ENCODE measurements at regions of chr5 and their contacts with region 1.

Region 1: GRCh38 chr5:472656-473553 is 29.9 kb downstream of the EXOC3 start:
- DNase-seq: peak; percentile 86
- H3K4me3 Mint-ChIP-seq: peak overlapping the region; percentile 78
- H3K27ac Mint-ChIP-seq: peak overlapping the region; percentile 81
- H3K4me1 Mint-ChIP-seq: peaks cover 28% of the 10 kb centered on the region
- H3K27me3 Mint-ChIP-seq: peaks cover 2% of the 10 kb centered on the region

Region 2: DNA sequence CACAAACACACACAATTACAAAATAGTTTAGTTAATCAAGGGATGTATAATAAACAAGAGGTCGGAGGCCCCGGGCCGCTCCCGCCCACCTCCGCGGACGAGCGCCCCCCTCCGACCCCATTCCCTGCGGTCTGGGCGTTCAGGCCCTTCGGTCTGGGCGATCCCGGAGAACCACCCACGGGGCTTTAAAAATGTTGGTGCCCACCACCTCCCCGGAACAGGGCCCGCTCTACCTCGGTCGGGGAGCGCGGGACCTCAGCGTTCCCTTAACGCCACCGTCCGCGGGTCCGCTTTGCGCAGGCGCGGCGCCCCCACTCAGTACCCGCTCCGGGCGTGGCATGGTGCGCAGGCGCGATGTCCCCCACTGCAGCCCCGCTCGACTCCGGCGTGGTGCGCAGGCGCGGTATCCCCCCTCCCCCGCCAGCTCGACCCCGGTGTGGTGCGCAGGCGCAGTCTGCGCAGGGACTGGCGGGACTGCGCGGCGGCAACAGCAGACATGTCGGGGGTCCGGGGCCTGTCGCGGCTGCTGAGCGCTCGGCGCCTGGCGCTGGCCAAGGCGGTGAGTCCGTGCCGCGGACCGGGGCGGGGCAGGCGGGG is 254.9 kb before region 1 on chr5 and contains the starts of genes CCDC127 and SDHA:
- CTCF ChIA-PET with region 1: no interaction called
- intact Hi-C with region 1: loop called (anchors 5 kb)
- DNase-seq: peak; percentile 94
- H3K4me3 Mint-ChIP-seq: peak within 1 kb of the TSS; percentile 92
- H3K27ac Mint-ChIP-seq: peak within 1 kb of the TSS; percentile 86
- H3K4me1 Mint-ChIP-seq: peaks cover 60% of the 10 kb centered on the region
- H3K27me3 Mint-ChIP-seq: no peaks in the 10 kb centered on the region
- total RNA-seq, gene CCDC127: 3.6 to 4.0 TPM
- total RNA-seq, gene SDHA: 133 to 136 TPM

Region 3: DNA sequence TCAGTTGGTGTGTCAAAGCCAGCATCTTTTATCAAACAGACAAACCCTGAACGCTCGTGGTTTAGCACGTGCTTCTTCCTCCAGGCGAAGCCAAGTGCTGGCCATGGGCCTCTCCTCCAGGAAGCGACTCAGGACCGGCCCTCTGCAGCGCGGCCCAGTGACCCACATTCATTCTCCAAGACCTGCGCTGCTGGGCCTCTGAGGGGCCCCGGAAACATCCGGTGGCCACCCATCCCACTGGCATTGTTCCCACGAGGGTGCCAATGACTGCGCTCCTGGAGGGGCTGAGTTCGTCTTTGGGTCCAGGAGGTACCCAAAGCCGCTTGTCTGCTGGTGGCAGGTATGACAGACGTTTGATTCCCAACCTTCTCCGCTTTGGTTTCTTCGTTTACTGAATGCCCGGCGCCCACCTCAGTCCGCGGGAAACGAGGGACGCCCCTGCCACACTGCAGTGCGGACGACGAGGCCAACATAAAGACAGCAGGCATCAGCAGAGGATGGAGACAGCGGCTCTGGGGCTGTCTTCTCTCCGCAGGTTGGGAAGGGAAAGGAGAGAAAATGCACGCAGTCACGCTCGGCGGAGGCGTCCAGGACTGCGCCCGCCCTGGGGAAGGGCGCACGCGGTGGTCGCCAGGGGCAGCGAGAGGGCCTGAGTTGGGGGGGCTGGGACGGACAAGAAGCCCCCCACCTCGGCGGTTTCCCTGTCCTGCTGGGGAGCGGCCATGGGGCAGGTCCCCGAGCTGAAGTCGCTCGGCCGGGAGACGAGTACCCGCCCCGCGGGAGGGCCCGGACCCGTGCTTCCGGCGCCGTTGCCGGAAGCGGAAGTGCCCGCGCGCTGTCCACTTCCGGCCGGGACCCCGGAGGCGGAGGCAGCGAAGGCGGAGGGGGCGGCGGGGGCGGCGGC is 30.3 kb before region 1 on chr5 and contains the start of gene EXOC3:
- CTCF ChIA-PET with region 1: interaction called, 20 read pairs
- intact Hi-C with region 1: loop called (anchors 2 kb)
- DNase-seq: peak; percentile 71
- H3K4me3 Mint-ChIP-seq: peak within 1 kb of the TSS; percentile 95
- H3K27ac Mint-ChIP-seq: peak within 1 kb of the TSS; percentile 87
- H3K4me1 Mint-ChIP-seq: peaks cover 29% of the 10 kb centered on the region
- H3K27me3 Mint-ChIP-seq: no peaks in the 10 kb centered on the region
- total RNA-seq, gene EXOC3: 41.6 to 41.7 TPM

Region 4: DNA sequence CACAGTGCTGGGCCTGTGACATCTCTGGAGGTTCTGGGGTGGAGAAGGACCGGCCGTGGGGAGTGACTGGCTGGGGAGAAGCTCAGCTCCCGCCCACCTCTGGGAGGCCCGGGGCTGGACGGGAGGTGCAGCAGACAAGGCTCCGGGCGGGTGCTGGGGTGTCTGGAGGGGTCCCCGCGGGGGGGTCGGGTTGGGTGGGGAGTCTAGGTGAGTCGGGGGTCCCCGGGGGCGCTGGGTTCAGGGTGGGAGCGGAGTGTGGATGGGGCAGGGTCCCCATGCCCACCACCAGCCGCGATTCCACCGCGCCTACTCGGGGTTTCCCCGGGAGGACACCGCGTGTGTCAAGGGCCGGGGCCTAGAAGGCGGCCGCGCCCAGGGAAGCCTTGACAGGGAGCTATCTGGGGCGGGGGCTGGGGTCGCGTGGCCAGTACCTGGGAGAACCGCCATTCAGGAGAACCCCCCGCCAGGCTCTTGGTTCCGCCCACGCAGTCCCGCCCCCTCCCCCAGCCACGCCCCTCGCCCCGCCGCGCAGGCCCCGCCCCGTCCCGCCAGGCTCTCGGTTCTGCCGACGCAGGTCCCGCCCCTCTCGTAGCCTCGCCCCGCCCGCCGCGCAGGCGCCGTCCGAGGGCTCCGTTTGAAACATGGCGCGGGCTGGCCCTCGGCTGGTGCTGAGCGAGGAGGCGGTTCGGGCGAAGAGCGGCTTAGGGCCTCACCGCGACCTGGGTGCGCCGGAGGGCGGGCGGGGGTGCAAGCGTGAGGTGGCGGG is 139.0 kb after region 1 on chr5 and contains the start of gene CEP72:
- CTCF ChIA-PET with region 1: no interaction called
- intact Hi-C with region 1: loop called (anchors 1 kb)
- DNase-seq: peak; percentile 94
- H3K4me3 Mint-ChIP-seq: peak within 1 kb of the TSS; percentile 93
- H3K27ac Mint-ChIP-seq: peak within 1 kb of the TSS; percentile 74
- H3K4me1 Mint-ChIP-seq: peaks cover 51% of the 10 kb centered on the region
- H3K27me3 Mint-ChIP-seq: peaks cover 8% of the 10 kb centered on the region
- total RNA-seq, gene CEP72: 18.3 to 18.8 TPM

Region 5: GRCh38 chr5:1068204-1068894 is 595.4 kb after region 1 on chr5:
- CTCF ChIA-PET with region 1: no interaction called
- intact Hi-C with region 1: no loop called
- DNase-seq: no peak
- H3K4me3 Mint-ChIP-seq: no peak overlapping the region
- H3K27ac Mint-ChIP-seq: no peak overlapping the region
- H3K4me1 Mint-ChIP-seq: no peaks in the 10 kb centered on the region
- H3K27me3 Mint-ChIP-seq: no peaks in the 10 kb centered on the region

Region 6: GRCh38 chr5:1344975-1345838 is 872.3 kb after region 1 on chr5 and contains the start of gene CLPTM1L:
- CTCF ChIA-PET with region 1: no interaction called
- intact Hi-C with region 1: loop called (anchors 10 kb)
- DNase-seq: peak; percentile 87
- H3K4me3 Mint-ChIP-seq: peak within 1 kb of the TSS; percentile 79
- H3K27ac Mint-ChIP-seq: peak within 1 kb of the TSS; percentile 70
- H3K4me1 Mint-ChIP-seq: peaks cover 31% of the 10 kb centered on the region
- H3K27me3 Mint-ChIP-seq: no peaks in the 10 kb centered on the region
- total RNA-seq, gene CLPTM1L: 48.0 to 48.5 TPM